ENCODE measurements at regions of chr1 and their contacts with region 1.

Region 1: GRCh38 chr1:232844791-232845190 is 39.6 kb downstream of the MAP10 start:
- DNase-seq: peak; percentile 76
- ATAC-seq: no peak
- H3K4me3 ChIP-seq: no peak overlapping the region
- H3K27ac ChIP-seq: no peak overlapping the region
- H3K4me1 ChIP-seq: no peaks in the 10 kb centered on the region
- H3K27me3 ChIP-seq: no peaks in the 10 kb centered on the region
- CTCF ChIP-seq: no peak
- POLR2A ChIP-seq: no peak
- RAD21 ChIP-seq: no peak

Region 2: DNA sequence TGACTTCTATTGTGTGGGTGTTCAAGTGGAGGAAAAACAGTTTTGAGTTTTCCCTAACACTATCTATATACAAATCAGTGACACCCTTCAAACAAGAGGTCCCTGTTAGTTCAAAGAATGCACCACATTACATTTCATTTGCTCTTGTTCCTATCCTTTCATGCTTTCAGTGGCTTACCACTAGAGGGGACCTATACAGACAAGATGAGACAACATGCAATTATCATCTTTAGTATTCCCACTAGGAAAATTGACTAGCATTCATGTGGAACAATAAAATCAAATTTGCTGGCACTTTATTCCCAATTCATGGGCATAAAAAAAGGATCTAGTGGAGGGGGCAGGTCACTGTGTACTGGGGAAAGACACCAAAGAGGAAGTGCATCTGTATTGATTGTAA is 201.5 kb before region 1 on chr1:
- CTCF ChIA-PET with region 1: no interaction called
- POLR2A ChIA-PET with region 1: no interaction called
- dilution Hi-C with region 1: no loop called
- in situ Hi-C with region 1: no loop called
- intact Hi-C with region 1: no loop called
- DNase-seq: peak; percentile 9
- ATAC-seq: peak; percentile 66; the same call in 1 of the 2 replicates
- H3K4me3 ChIP-seq: no peak overlapping the region
- H3K27ac ChIP-seq: no peak overlapping the region
- H3K4me1 ChIP-seq: no peaks in the 10 kb centered on the region
- H3K27me3 ChIP-seq: no peaks in the 10 kb centered on the region
- CTCF ChIP-seq: no peak; the same call in 1 of the 2 replicates
- POLR2A ChIP-seq: no peak
- RAD21 ChIP-seq: no peak; the same call in 1 of the 2 replicates

Region 3: GRCh38 chr1:232943679-232944252 is 99.0 kb after region 1 on chr1:
- CTCF ChIA-PET with region 1: no interaction called
- POLR2A ChIA-PET with region 1: no interaction called
- dilution Hi-C with region 1: loop called (anchors 25 kb)
- in situ Hi-C with region 1: no loop called
- intact Hi-C with region 1: no loop called
- DNase-seq: no peak
- ATAC-seq: no peak
- H3K4me3 ChIP-seq: no peak overlapping the region
- H3K27ac ChIP-seq: no peak overlapping the region
- H3K4me1 ChIP-seq: no peaks in the 10 kb centered on the region
- H3K27me3 ChIP-seq: no peaks in the 10 kb centered on the region; the same call in 1 of the 2 replicates
- CTCF ChIP-seq: no peak
- POLR2A ChIP-seq: no peak
- RAD21 ChIP-seq: no peak